Calu3 (cell line): ENCODE measurements at regions of chr20 and their contacts with region 1.

Region 1: DNA sequence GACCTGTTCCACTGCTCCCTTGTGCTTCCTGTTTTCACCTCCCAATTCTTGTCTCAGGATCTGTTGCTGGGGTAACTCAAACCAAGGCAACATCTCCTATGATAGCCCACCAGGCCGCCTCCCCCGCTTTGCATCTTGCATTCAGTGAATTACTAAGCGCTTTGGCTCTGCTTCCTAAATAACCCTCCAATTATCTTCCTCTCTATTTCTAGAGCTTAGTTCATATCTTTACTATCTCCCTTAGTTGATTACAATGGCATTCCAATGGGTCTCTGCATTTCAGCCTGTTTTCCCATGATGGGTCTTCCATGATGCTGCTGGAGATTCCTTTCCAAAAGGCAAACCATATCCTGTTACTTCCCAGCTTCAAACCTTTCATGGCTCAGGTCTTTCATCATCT is 117.2 kb upstream of the FERMT1 start:
- DNase-seq: no peak
- H3K4me3 Mint-ChIP-seq: no peak overlapping the region
- H3K27ac Mint-ChIP-seq: no peak overlapping the region
- H3K4me1 Mint-ChIP-seq: no peaks in the 10 kb centered on the region
- H3K27me3 Mint-ChIP-seq: peaks cover 47% of the 10 kb centered on the region
- CTCF ChIP-seq: no peak

Region 2: GRCh38 chr20:6142348-6142993 is 97.6 kb before region 1 on chr20:
- CTCF ChIA-PET with region 1: no interaction called
- intact Hi-C with region 1: loop called (anchors 5 kb)
- DNase-seq: peak; percentile 40
- H3K4me3 Mint-ChIP-seq: no peak overlapping the region
- H3K27ac Mint-ChIP-seq: no peak overlapping the region
- H3K4me1 Mint-ChIP-seq: no peaks in the 10 kb centered on the region
- H3K27me3 Mint-ChIP-seq: peaks cover 12% of the 10 kb centered on the region
- CTCF ChIP-seq: peak; percentile 56

Region 3: DNA sequence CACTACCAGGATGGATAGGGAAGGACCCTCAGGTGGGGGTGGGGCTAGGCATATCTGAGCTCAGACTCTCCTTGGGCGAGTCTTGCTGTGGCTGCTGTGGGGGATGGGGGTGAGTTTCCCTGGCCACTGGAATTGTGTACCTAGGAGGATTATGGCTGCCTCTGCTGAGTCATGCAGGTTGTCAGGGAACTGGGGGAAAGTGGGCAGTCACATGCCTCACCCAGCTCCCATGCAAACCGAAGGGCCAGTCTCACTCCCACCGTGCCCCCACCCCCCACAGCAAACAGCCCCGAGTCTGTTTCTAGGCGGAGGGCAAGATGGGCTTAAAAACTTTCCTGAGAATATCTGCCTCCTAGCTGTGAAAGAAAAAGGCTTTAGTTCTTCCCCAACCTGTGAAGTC is 93.1 kb after region 1 on chr20:
- CTCF ChIA-PET with region 1: no interaction called
- intact Hi-C with region 1: no loop called
- DNase-seq: no peak
- H3K4me3 Mint-ChIP-seq: no peak overlapping the region
- H3K27ac Mint-ChIP-seq: no peak overlapping the region
- H3K4me1 Mint-ChIP-seq: no peaks in the 10 kb centered on the region
- H3K27me3 Mint-ChIP-seq: peaks cover 17% of the 10 kb centered on the region
- CTCF ChIP-seq: no peak